Activated naive CD4-positive, alpha-beta T cell treated with anti-CD3 and anti-CD28 coated beads for 36 hours (primary cell): ENCODE measurements at regions of chr7 and their contacts with region 1.

Region 1: GRCh38 chr7:105346593-105347322 is 42.0 kb downstream of the SRPK2 start:
- DNase-seq: no peak
- H3K4me3 Mint-ChIP-seq: no peak overlapping the region
- H3K27ac Mint-ChIP-seq: no peak overlapping the region
- H3K4me1 Mint-ChIP-seq: peaks cover 66% of the 10 kb centered on the region
- H3K27me3 Mint-ChIP-seq: no peaks in the 10 kb centered on the region

Region 2: DNA sequence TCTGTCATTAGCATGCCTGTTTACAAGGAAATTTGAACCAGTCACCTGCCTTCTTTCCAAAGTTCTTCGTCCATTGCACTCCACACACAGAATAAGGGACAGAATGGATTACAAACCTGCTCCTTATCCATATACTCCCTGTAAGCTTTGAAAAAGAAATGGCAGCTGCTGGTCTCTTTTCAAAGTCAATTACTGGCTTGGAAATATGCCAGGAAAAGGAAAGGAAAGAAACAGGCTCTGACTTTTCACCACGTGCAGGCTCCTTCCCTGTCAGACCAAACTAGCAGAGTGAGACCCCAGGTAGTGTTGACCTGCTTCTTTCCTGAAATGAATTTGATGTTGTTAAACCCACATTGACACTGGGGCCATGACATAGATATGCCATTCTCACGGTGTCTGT is 933.8 kb before region 1 on chr7:
- CTCF ChIA-PET with region 1: no interaction called
- intact Hi-C with region 1: no loop called
- DNase-seq: no peak
- H3K4me3 Mint-ChIP-seq: no peak overlapping the region
- H3K27ac Mint-ChIP-seq: no peak overlapping the region
- H3K4me1 Mint-ChIP-seq: no peaks in the 10 kb centered on the region
- H3K27me3 Mint-ChIP-seq: peaks cover under 1% of the 10 kb centered on the region

Region 3: GRCh38 chr7:105098863-105099515 is 247.8 kb before region 1 on chr7:
- CTCF ChIA-PET with region 1: no interaction called
- intact Hi-C with region 1: loop called (anchors 1 kb)
- DNase-seq: no peak
- H3K4me3 Mint-ChIP-seq: no peak overlapping the region
- H3K27ac Mint-ChIP-seq: peak overlapping the region; percentile 73
- H3K4me1 Mint-ChIP-seq: peaks cover 59% of the 10 kb centered on the region
- H3K27me3 Mint-ChIP-seq: no peaks in the 10 kb centered on the region

Region 4: GRCh38 chr7:105268511-105269392 is 78.0 kb before region 1 on chr7:
- CTCF ChIA-PET with region 1: no interaction called
- intact Hi-C with region 1: loop called (anchors 2 kb)
- DNase-seq: peak; percentile 14
- H3K4me3 Mint-ChIP-seq: peak overlapping the region; percentile 72
- H3K27ac Mint-ChIP-seq: peak overlapping the region; percentile 90
- H3K4me1 Mint-ChIP-seq: peaks cover 53% of the 10 kb centered on the region
- H3K27me3 Mint-ChIP-seq: no peaks in the 10 kb centered on the region

Region 5: GRCh38 chr7:105298439-105298907 is 48.3 kb before region 1 on chr7:
- CTCF ChIA-PET with region 1: no interaction called
- intact Hi-C with region 1: loop called (anchors 1 kb)
- DNase-seq: peak; percentile 55
- H3K4me3 Mint-ChIP-seq: peak overlapping the region; percentile 33
- H3K27ac Mint-ChIP-seq: peak overlapping the region; percentile 44
- H3K4me1 Mint-ChIP-seq: peaks cover 51% of the 10 kb centered on the region
- H3K27me3 Mint-ChIP-seq: no peaks in the 10 kb centered on the region

Region 6: GRCh38 chr7:106891547-106892410 is 1545.0 kb after region 1 on chr7:
- CTCF ChIA-PET with region 1: no interaction called
- intact Hi-C with region 1: loop called (anchors 5 kb)
- DNase-seq: no peak
- H3K4me3 Mint-ChIP-seq: no peak overlapping the region
- H3K27ac Mint-ChIP-seq: no peak overlapping the region
- H3K4me1 Mint-ChIP-seq: peaks cover 8% of the 10 kb centered on the region
- H3K27me3 Mint-ChIP-seq: no peaks in the 10 kb centered on the region